HepG2 (cell line): ENCODE measurements at regions of chr16 and their contacts with region 1.

Region 1: DNA sequence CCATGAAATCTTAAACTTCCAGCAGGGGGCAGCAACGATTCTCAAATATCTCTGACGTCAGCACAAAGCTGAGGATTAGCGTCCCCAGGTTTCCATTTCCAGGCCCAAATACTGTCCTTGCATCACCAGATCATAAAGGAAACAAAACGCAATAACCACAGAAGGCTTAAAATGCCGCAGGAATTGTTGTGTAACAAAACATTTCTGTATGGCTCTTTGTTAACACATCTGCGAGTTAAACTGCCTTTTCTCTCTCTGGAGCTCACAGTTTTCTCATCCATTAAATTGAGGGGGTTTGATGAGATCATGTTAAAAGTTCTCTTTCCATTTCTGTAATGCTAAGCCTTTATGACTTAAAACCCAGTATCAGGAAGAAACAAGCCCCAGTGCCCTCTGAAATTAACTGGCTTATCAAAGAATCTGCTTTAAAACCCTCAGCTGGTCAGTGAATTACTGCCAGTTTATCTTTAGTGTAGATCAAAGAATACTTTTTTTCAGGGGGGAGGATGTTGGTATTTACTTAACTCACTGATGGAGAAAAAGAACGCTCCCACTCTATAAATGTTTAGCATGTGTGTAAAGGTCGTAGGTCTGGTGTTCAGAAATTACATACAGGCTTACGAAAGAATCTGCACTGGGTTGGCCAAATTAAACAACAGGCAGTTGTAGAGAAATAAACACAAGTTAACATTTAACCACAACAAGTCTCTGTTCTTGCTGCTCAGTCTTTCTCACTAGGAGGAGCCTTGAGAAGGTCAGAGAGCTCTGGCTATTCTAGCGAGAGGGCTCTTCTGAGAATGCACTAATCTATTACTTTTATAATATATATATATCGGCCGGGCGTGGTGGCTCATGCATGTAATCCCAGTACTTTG is 10.6 kb upstream of the TERF2 start:
- DNase-seq: peak; percentile 99
- ATAC-seq: peak; percentile 89
- H3K4me3 ChIP-seq: peak overlapping the region; percentile 31 to 63 (median 51); a peak in 5 of 6 replicates
- H3K27ac ChIP-seq: peak overlapping the region; percentile 95
- H3K4me1 ChIP-seq: peaks cover 65% of the 10 kb centered on the region
- H3K27me3 ChIP-seq: no peaks in the 10 kb centered on the region
- CTCF ChIP-seq: peak; percentile 80
- EP300 ChIP-seq: peak; percentile 48 to 99; a peak in 3 of 4 replicates
- POLR2A ChIP-seq: peak in 1 of 2 experiments; percentile 57; a peak in 1 of 4 replicates
- RAD21 ChIP-seq: peak; percentile 61

Region 2: GRCh38 chr16:69276148-69277115 is 120.0 kb before region 1 on chr16:
- CTCF ChIA-PET with region 1: no interaction called
- POLR2A ChIA-PET with region 1: no interaction called
- in situ Hi-C with region 1: no loop called
- intact Hi-C with region 1: no loop called
- DNase-seq: no peak
- ATAC-seq: no peak
- H3K4me3 ChIP-seq: no peak overlapping the region
- H3K27ac ChIP-seq: no peak overlapping the region
- H3K4me1 ChIP-seq: no peaks in the 10 kb centered on the region
- H3K27me3 ChIP-seq: no peaks in the 10 kb centered on the region
- CTCF ChIP-seq: no peak
- EP300 ChIP-seq: no peak
- POLR2A ChIP-seq: no peak
- RAD21 ChIP-seq: no peak

Region 3: GRCh38 chr16:69340109-69340644 is 56.2 kb before region 1 on chr16:
- CTCF ChIA-PET with region 1: no interaction called
- POLR2A ChIA-PET with region 1: no interaction called
- in situ Hi-C with region 1: no loop called
- intact Hi-C with region 1: no loop called
- DNase-seq: no peak
- ATAC-seq: peak; percentile 45
- H3K4me3 ChIP-seq: peak overlapping the region; percentile 79 to 94 (median 86)
- H3K27ac ChIP-seq: peak overlapping the region; percentile 86
- H3K4me1 ChIP-seq: peaks cover 39% of the 10 kb centered on the region
- H3K27me3 ChIP-seq: no peaks in the 10 kb centered on the region; a peak in 1 of 5 replicates
- CTCF ChIP-seq: no peak
- EP300 ChIP-seq: no peak
- POLR2A ChIP-seq: no peak
- RAD21 ChIP-seq: 0 out of 2 replicates have a peak, but pooled peaks have one; percentile 6

Region 4: DNA sequence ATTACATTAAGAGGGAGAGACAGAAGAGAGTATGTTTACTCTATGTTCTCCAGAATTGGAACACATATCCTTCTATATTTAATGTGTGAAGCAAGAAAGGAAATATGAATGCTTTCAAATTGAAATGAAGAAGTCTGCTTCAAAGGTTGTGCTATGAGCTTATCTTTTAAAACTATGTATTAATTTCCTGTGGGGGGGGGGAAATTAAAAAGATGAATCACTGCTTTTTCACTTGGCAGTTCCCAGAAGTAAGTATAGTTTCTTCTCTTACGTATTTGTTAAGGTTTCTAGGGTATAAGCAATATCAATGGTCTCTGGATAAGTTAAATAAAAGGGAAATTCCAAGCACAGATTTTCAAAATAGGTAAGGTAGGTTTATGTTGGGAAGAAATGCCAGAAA is 17.7 kb before region 1 on chr16:
- CTCF ChIA-PET with region 1: no interaction called
- POLR2A ChIA-PET with region 1: interaction called, 14 read pairs
- in situ Hi-C with region 1: no loop called
- intact Hi-C with region 1: no loop called
- DNase-seq: no peak
- ATAC-seq: no peak
- H3K4me3 ChIP-seq: no peak overlapping the region
- H3K27ac ChIP-seq: peak overlapping the region; percentile 52
- H3K4me1 ChIP-seq: peaks cover 66% of the 10 kb centered on the region
- H3K27me3 ChIP-seq: no peaks in the 10 kb centered on the region; a peak in 1 of 5 replicates
- CTCF ChIP-seq: no peak
- EP300 ChIP-seq: no peak
- POLR2A ChIP-seq: no peak
- RAD21 ChIP-seq: no peak

Region 5: GRCh38 chr16:69465083-69465721 is 68.8 kb after region 1 on chr16:
- CTCF ChIA-PET with region 1: interaction called, 5 read pairs
- POLR2A ChIA-PET with region 1: interaction called, 52 read pairs
- in situ Hi-C with region 1: loop called (anchors 5 kb)
- intact Hi-C with region 1: loop called (anchors 1 kb)
- DNase-seq: peak; percentile 45
- ATAC-seq: peak; percentile 66
- H3K4me3 ChIP-seq: peak overlapping the region in 2 of 3 experiments; percentile 3 to 38; a peak in 3 of 6 replicates
- H3K27ac ChIP-seq: peak overlapping the region; percentile 82
- H3K4me1 ChIP-seq: peaks cover 73% of the 10 kb centered on the region
- H3K27me3 ChIP-seq: no peaks in the 10 kb centered on the region
- CTCF ChIP-seq: peak; percentile 64
- EP300 ChIP-seq: no peak; a peak in 1 of 4 replicates
- POLR2A ChIP-seq: no peak; a peak in 2 of 4 replicates
- RAD21 ChIP-seq: peak; percentile 40

Region 6: GRCh38 chr16:69565671-69566239 is 169.3 kb after region 1 on chr16 and contains the start of gene NFAT5:
- CTCF ChIA-PET with region 1: interaction called, 3 read pairs
- POLR2A ChIA-PET with region 1: interaction called, 60 read pairs
- in situ Hi-C with region 1: loop called (anchors 10 kb)
- intact Hi-C with region 1: loop called (anchors 1 kb)
- DNase-seq: peak; percentile 92
- ATAC-seq: peak; percentile 85
- H3K4me3 ChIP-seq: peak within 1 kb of the TSS; percentile 94 to 99 (median 98)
- H3K27ac ChIP-seq: peak within 1 kb of the TSS; percentile 95
- H3K4me1 ChIP-seq: peaks cover 60% of the 10 kb centered on the region
- H3K27me3 ChIP-seq: no peaks in the 10 kb centered on the region; a peak in 1 of 5 replicates
- CTCF ChIP-seq: peak; percentile 63
- EP300 ChIP-seq: peak; percentile 86 to 100; a peak in 3 of 4 replicates
- POLR2A ChIP-seq: peak; percentile 43 to 84
- RAD21 ChIP-seq: peak; percentile 71
- total RNA-seq, gene NFAT5: 20.5 and 49.3 TPM in 2 replicates

Region 7: GRCh38 chr16:69726296-69727060 is 330.1 kb after region 1 on chr16 and contains the start of gene NQO1:
- CTCF ChIA-PET with region 1: no interaction called
- POLR2A ChIA-PET with region 1: interaction called, 41 read pairs
- in situ Hi-C with region 1: no loop called
- intact Hi-C with region 1: no loop called
- DNase-seq: peak; percentile 96
- ATAC-seq: peak; percentile 89
- H3K4me3 ChIP-seq: peak within 1 kb of the TSS; percentile 58 to 72 (median 72)
- H3K27ac ChIP-seq: peak within 1 kb of the TSS; percentile 87
- H3K4me1 ChIP-seq: peaks cover 71% of the 10 kb centered on the region
- H3K27me3 ChIP-seq: no peaks in the 10 kb centered on the region
- CTCF ChIP-seq: no peak
- EP300 ChIP-seq: peak; percentile 24 to 71; a peak in 2 of 4 replicates
- POLR2A ChIP-seq: peak; percentile 98 to 99
- RAD21 ChIP-seq: no peak
- total RNA-seq, gene NQO1: 1,060 and 1,621 TPM in 2 replicates

Region 8: DNA sequence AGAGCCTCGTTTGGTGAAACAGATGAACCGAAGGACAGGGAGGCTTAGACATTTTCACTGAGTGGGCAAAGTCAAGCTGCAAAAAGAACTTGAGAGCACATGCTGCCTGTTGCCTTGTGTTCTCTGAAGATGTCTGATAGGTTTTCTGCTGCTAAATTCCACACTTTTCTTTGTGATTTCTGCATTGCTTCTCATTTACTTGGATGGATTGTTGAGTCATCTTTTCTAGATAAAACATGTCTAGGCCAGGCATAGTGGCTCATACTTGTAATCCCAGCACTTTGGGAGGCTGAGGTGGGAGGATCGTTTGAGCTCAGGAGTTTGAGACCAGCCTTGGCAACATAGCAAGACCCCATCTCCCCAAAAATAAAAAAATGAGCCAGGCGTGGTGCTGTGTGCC is 474.3 kb after region 1 on chr16:
- CTCF ChIA-PET with region 1: no interaction called
- POLR2A ChIA-PET with region 1: no interaction called
- in situ Hi-C with region 1: no loop called
- intact Hi-C with region 1: no loop called
- DNase-seq: no peak
- ATAC-seq: no peak
- H3K4me3 ChIP-seq: no peak overlapping the region
- H3K27ac ChIP-seq: no peak overlapping the region
- H3K4me1 ChIP-seq: peaks cover 2% of the 10 kb centered on the region
- H3K27me3 ChIP-seq: no peaks in the 10 kb centered on the region
- CTCF ChIP-seq: no peak
- EP300 ChIP-seq: no peak
- POLR2A ChIP-seq: no peak
- RAD21 ChIP-seq: no peak